PC-3 (cell line): ENCODE measurements at regions of chr2 and their contacts with region 1.

Region 1: DNA sequence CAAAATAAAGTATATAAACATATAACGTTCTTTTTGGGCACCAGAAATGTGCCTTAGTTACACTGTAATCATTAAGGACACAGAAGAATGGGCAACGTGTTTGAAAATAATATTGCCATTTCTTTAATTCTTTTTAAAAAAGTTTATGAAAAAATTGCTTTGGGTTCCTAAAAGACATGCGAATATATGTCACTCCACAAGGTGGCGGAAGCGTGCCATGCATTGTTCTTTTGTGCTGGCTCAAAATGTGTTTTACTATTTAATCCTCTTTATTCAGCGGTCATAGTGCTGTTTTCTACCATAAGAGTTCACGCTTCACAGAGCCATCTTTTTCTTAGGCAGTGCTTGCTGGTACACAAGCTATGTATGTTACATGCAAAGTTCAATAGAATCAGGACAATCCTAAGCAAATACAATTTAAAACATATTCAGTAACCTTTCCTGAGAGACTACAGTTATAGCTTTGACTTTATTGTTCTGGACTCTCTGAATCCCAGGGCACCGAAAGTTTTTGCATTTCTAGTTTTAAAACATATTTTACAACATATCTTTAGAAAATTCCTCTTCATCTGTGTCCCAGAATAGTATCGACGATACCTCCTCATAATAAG is 147.8 kb upstream of the ERBB4 start:
- DNase-seq: peak; percentile 77
- ATAC-seq: peak; percentile 59
- H3K4me3 ChIP-seq: no peak overlapping the region
- H3K27ac ChIP-seq: no peak overlapping the region
- H3K4me1 ChIP-seq: peaks cover 9% of the 10 kb centered on the region; the same call in 1 of the 2 replicates
- H3K27me3 ChIP-seq: no peaks in the 10 kb centered on the region
- CTCF ChIP-seq: peak; percentile 92

Region 2: DNA sequence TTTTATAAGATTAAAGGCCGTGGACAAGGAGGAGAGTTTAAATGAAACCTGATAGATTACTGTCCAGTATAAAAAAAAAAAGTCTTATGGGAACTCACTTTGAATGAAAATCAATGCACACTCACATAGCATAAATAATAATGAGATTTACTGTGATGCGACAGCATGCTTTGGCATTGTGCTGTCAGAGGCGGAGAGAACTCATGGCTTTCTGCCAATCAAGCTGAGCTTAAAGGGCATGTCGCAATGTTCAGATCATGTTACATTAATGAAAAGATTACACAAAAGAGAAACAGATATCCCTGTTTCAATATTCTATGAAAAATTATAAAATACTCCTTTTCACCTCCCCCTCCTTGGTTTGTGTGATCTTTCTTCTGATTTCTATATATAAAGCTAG is 458.6 kb before region 1 on chr2:
- CTCF ChIA-PET with region 1: no interaction called
- POLR2A ChIA-PET with region 1: no interaction called
- intact Hi-C with region 1: no loop called
- DNase-seq: peak; percentile 82
- ATAC-seq: peak; percentile 71
- H3K4me3 ChIP-seq: no peak overlapping the region
- H3K27ac ChIP-seq: no peak overlapping the region
- H3K4me1 ChIP-seq: no peaks in the 10 kb centered on the region
- H3K27me3 ChIP-seq: no peaks in the 10 kb centered on the region
- CTCF ChIP-seq: no peak

Region 3: GRCh38 chr2:212595037-212595654 is 91.2 kb before region 1 on chr2:
- CTCF ChIA-PET with region 1: no interaction called
- POLR2A ChIA-PET with region 1: no interaction called
- intact Hi-C with region 1: loop called (anchors 1 kb)
- DNase-seq: peak; percentile 72
- ATAC-seq: peak; percentile 75
- H3K4me3 ChIP-seq: no peak overlapping the region
- H3K27ac ChIP-seq: no peak overlapping the region
- H3K4me1 ChIP-seq: peaks cover 28% of the 10 kb centered on the region
- H3K27me3 ChIP-seq: no peaks in the 10 kb centered on the region
- CTCF ChIP-seq: peak; percentile 82

Region 4: GRCh38 chr2:212777020-212777491 is 90.7 kb after region 1 on chr2:
- CTCF ChIA-PET with region 1: no interaction called
- POLR2A ChIA-PET with region 1: no interaction called
- intact Hi-C with region 1: loop called (anchors 1 kb)
- DNase-seq: peak; percentile 77
- ATAC-seq: peak; percentile 63
- H3K4me3 ChIP-seq: peak overlapping the region; percentile 45
- H3K27ac ChIP-seq: no peak overlapping the region
- H3K4me1 ChIP-seq: peaks cover 11% of the 10 kb centered on the region; the same call in 1 of the 2 replicates
- H3K27me3 ChIP-seq: no peaks in the 10 kb centered on the region
- CTCF ChIP-seq: peak; percentile 79

Region 5: DNA sequence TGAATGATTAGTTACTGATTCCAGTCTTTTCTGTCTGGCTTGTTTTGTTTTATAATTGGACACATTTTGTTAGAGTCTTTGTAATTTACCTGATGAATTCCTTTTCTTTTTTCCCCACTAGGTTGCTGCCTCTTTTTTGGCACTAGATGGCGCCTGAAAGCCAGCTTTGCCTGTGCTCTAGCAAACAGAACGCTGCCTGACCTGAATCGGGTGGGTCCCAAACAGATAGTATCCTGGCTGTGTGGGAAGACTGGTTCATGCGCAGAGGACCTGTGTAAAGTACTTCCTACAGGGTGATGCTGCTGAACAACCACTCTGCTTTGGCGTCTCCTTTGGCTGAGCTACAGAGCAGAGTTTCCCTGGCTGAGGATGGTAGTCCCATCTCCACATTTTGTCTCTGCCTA is 176.8 kb after region 1 on chr2:
- CTCF ChIA-PET with region 1: no interaction called
- POLR2A ChIA-PET with region 1: no interaction called
- intact Hi-C with region 1: loop called (anchors 1 kb)
- DNase-seq: peak; percentile 64
- ATAC-seq: peak; percentile 18; the same call in 1 of the 2 replicates
- H3K4me3 ChIP-seq: no peak overlapping the region
- H3K27ac ChIP-seq: no peak overlapping the region
- H3K4me1 ChIP-seq: no peaks in the 10 kb centered on the region
- H3K27me3 ChIP-seq: no peaks in the 10 kb centered on the region
- CTCF ChIP-seq: peak; percentile 87

Region 6: GRCh38 chr2:212892193-212892592 is 205.8 kb after region 1 on chr2:
- CTCF ChIA-PET with region 1: no interaction called
- POLR2A ChIA-PET with region 1: no interaction called
- intact Hi-C with region 1: loop called (anchors 1 kb)
- DNase-seq: peak; percentile 75
- ATAC-seq: peak; percentile 79
- H3K4me3 ChIP-seq: no peak overlapping the region
- H3K27ac ChIP-seq: no peak overlapping the region
- H3K4me1 ChIP-seq: no peaks in the 10 kb centered on the region
- H3K27me3 ChIP-seq: no peaks in the 10 kb centered on the region
- CTCF ChIP-seq: peak; percentile 81

Region 7: DNA sequence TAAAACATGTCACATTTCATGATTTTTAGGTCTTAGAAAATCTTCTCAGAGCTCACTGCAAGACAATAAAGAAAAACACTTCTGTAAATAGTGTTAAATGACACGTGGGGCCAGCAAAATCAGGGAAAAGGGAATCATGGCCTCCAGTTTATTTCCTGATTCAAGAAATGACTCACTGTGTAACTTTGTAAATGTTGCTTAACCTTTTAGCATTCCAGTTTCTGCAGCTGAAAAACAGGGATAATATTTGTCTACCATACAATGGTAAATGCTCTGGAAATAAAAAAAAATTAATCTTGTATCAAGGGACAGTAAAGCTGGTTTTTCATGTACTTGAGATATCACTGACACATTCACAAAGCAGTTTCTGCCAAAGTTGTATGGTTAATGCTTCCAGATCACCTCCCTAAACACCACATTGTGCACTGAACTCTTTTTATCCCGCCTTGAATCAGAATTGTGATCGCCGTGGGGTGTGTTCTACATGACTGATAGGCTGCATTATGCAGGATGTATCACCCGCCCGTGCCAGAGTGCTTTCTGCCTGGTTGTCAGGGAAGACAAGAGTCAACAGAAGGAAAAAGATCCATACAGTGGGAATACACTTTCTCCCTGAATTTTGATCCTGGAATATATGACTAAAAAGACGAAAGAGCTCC is 226.2 kb after region 1 on chr2:
- CTCF ChIA-PET with region 1: no interaction called
- POLR2A ChIA-PET with region 1: no interaction called
- intact Hi-C with region 1: loop called (anchors 5 kb)
- DNase-seq: peak; percentile 92
- ATAC-seq: peak; percentile 83
- H3K4me3 ChIP-seq: peak overlapping the region; percentile 54
- H3K27ac ChIP-seq: peak overlapping the region; percentile 94
- H3K4me1 ChIP-seq: peaks cover 55% of the 10 kb centered on the region
- H3K27me3 ChIP-seq: no peaks in the 10 kb centered on the region
- CTCF ChIP-seq: no peak

Region 8: GRCh38 chr2:213125646-213126347 is 439.4 kb after region 1 on chr2:
- CTCF ChIA-PET with region 1: no interaction called
- POLR2A ChIA-PET with region 1: no interaction called
- intact Hi-C with region 1: loop called (anchors 1 kb)
- DNase-seq: peak; percentile 54
- ATAC-seq: peak; percentile 72
- H3K4me3 ChIP-seq: no peak overlapping the region
- H3K27ac ChIP-seq: no peak overlapping the region
- H3K4me1 ChIP-seq: peaks cover 20% of the 10 kb centered on the region
- H3K27me3 ChIP-seq: no peaks in the 10 kb centered on the region
- CTCF ChIP-seq: peak; percentile 44